Heart left ventricle (tissue), 16 donors: ENCODE measurements at regions of chr2 and their contacts with region 1.

Region 1: GRCh38 chr2:57906152-57906732 is 140.4 kb upstream of the VRK2 start:
- DNase-seq: no peak
- ATAC-seq: peak in 3 of 4 donors; percentile 69 to 88 (median 82)
- H3K4me3 ChIP-seq: no peak overlapping the region
- H3K27ac ChIP-seq: no peak overlapping the region
- H3K4me1 ChIP-seq: peaks cover 0 to 20% (median 0%) of the 10 kb centered on the region in 12 donors
- H3K27me3 ChIP-seq: no peaks in the 10 kb centered on the region
- CTCF ChIP-seq: peak; percentile 65 to 85 (median 78)
- POLR2A ChIP-seq: no peak

Region 2: GRCh38 chr2:58107803-58108710 is 201.8 kb after region 1 on chr2:
- intact Hi-C with region 1: no loop called
- DNase-seq: no peak
- ATAC-seq: peak in 3 of 4 donors; percentile 45 to 68 (median 67)
- H3K4me3 ChIP-seq: no peak overlapping the region
- H3K27ac ChIP-seq: peak overlapping the region in 1 of 12 donors; percentile 83
- H3K4me1 ChIP-seq: peaks cover 0 to 30% (median 0%) of the 10 kb centered on the region in 12 donors
- H3K27me3 ChIP-seq: no peaks in the 10 kb centered on the region
- CTCF ChIP-seq: no peak
- POLR2A ChIP-seq: no peak

Region 3: DNA sequence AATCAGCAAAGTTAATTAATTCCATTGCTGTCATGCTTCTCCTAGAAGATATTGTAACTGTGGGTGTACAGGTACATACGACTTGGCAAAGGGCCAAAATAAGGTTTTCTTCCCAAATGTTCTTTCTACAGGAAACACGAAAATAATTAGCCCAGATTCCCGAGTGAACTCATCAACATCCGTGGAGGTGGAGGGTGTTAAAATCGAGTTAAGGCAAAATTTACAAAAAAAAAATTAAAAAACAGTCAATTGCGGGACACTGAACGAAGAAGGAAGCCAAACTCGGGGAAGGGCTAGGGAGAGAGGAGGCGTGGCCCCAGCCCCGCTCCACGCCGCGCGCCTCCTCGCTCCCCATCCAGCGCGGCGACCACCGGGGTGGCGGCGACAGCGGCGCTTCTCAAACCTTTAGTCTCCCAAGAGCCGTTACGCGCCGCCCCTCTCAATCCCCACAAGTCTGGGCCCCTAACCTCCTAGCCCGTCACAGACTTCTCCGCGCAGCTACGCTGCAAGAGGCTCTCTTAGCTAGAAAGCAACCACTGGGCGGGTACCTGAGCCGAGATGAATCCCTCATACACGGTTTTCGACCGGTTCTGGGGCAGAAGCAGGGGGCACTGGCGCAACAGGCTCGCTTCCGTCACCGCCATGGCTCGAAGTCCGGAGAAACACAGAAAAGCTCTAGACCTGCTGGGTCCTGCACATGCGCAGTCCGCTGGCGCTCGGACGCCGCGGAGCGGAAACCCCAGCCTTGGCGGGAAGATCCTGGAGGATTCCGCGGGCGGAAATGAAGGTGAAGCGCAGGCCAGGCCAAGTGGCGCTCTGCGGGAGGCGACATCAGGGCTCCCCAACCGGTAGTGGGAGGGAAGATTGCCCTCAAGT is 334.7 kb after region 1 on chr2 and contains the start of gene FANCL:
- intact Hi-C with region 1: loop called in 1 of 10 experiments (anchors 10 kb)
- DNase-seq: peak; percentile 89 to 95 (median 93)
- ATAC-seq: peak; percentile 95 to 99 (median 98)
- H3K4me3 ChIP-seq: peak within 1 kb of the TSS; percentile 66 to 96 (median 88)
- H3K27ac ChIP-seq: peak within 1 kb of the TSS; percentile 59 to 86 (median 81)
- H3K4me1 ChIP-seq: peaks cover 0 to 22% (median 9%) of the 10 kb centered on the region in 12 donors
- H3K27me3 ChIP-seq: no peaks in the 10 kb centered on the region
- CTCF ChIP-seq: peak in 1 of 12 donors; percentile 6
- POLR2A ChIP-seq: peak in 1 of 2 donors; percentile 59
- total RNA-seq, gene FANCL: 6.3 to 17.5 (median 10.1) TPM

Region 4: GRCh38 chr2:58441643-58442042 is 535.4 kb after region 1 on chr2:
- intact Hi-C with region 1: loop called in 7 of 10 experiments (anchors 5 to 10 kb)
- DNase-seq: no peak
- ATAC-seq: no peak
- H3K4me3 ChIP-seq: no peak overlapping the region
- H3K27ac ChIP-seq: no peak overlapping the region
- H3K4me1 ChIP-seq: no peaks in the 10 kb centered on the region
- H3K27me3 ChIP-seq: peaks cover 0 to 9% (median 0%) of the 10 kb centered on the region in 9 donors
- CTCF ChIP-seq: no peak
- POLR2A ChIP-seq: no peak

Region 5: GRCh38 chr2:58448065-58448507 is 541.8 kb after region 1 on chr2:
- intact Hi-C with region 1: loop called (anchors 2 to 10 kb)
- DNase-seq: peak in 4 of 5 donors; percentile 14 to 48 (median 34)
- ATAC-seq: peak in 2 of 4 donors; percentile 72 to 81
- H3K4me3 ChIP-seq: no peak overlapping the region
- H3K27ac ChIP-seq: no peak overlapping the region
- H3K4me1 ChIP-seq: no peaks in the 10 kb centered on the region
- H3K27me3 ChIP-seq: peaks cover 0 to 9% (median 0%) of the 10 kb centered on the region in 9 donors
- CTCF ChIP-seq: peak in 9 of 12 donors; percentile 32 to 66 (median 41)
- POLR2A ChIP-seq: no peak